Activated T-helper 2 cell treated with anti-CD3 and anti-CD28 coated beads, Interferon-gamma antibody, Interleukin-2, Interleukin-4, amounts not matched to agents 10 μg/mL and 5 μg/mL and 100 μg/mL, durations not matched to agents 14 hours and 24 hours and 36 hours (primary cell): ENCODE measurements at regions of chr10 and their contacts with region 1.

Region 1: DNA sequence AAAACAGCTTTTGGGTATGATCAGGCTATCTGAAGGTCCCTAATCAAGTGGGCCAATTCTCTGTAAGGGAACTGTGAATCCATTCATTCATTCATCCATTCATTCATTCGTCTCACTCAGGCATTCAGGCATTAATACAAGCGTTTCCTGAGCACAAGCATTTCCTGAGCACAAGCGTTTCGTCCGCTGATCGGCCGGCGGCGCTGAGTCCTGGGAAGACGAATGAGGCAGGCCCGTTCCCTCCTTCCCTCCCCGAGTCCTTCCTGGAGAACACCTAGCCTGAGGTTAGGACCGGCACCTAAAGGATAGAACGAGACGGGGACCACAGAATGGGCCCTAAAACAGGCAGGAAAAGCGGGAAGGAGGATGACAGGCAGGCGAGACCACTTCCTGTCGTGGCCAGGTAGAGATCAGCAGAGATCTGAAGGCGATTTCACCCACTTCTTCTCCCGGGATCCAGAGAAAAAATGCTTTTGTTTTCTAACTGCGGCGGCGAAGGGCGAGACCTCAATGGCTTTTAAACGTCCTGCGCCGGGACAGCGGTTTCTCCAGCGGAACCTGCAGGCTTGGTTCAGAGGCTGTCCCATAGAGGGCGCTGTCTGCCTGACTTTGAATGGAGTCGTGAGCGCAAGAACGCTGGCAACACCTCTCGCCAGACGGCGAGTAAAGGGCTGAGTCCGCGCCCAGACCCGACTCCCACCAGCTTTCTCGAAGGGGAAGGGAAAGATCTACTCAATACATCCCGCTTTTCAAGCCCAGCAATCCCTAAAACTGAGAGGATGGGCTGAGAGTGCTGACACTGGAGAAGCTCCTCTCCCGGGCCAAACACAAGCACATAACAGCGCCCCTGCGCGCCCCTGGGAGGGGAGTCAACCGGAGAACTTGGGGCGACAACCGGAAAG is 2.9 kb upstream of the HMX3 start:
- DNase-seq: peak; percentile 74
- H3K4me3 Mint-ChIP-seq: peak overlapping the region; percentile 55
- H3K27ac Mint-ChIP-seq: peak overlapping the region; percentile 44
- H3K4me1 Mint-ChIP-seq: peaks cover 14% of the 10 kb centered on the region
- H3K27me3 Mint-ChIP-seq: peaks cover 60% of the 10 kb centered on the region

Region 2: GRCh38 chr10:123043409-123043925 is 89.4 kb before region 1 on chr10:
- intact Hi-C with region 1: loop called (anchors 5 kb)
- DNase-seq: peak; percentile 32
- H3K4me3 Mint-ChIP-seq: no peak overlapping the region
- H3K27ac Mint-ChIP-seq: no peak overlapping the region
- H3K4me1 Mint-ChIP-seq: peaks cover 11% of the 10 kb centered on the region
- H3K27me3 Mint-ChIP-seq: no peaks in the 10 kb centered on the region

Region 3: GRCh38 chr10:123147635-123148413 is 15.0 kb after region 1 on chr10 and contains the start of gene HMX2:
- intact Hi-C with region 1: loop called (anchors 1 kb)
- DNase-seq: peak; percentile 12
- H3K4me3 Mint-ChIP-seq: peak within 1 kb of the TSS; percentile 57
- H3K27ac Mint-ChIP-seq: peak within 1 kb of the TSS; percentile 49
- H3K4me1 Mint-ChIP-seq: peaks cover 26% of the 10 kb centered on the region
- H3K27me3 Mint-ChIP-seq: peaks cover 69% of the 10 kb centered on the region
- total RNA-seq, gene HMX2: not detected in 2 replicates

Region 4: DNA sequence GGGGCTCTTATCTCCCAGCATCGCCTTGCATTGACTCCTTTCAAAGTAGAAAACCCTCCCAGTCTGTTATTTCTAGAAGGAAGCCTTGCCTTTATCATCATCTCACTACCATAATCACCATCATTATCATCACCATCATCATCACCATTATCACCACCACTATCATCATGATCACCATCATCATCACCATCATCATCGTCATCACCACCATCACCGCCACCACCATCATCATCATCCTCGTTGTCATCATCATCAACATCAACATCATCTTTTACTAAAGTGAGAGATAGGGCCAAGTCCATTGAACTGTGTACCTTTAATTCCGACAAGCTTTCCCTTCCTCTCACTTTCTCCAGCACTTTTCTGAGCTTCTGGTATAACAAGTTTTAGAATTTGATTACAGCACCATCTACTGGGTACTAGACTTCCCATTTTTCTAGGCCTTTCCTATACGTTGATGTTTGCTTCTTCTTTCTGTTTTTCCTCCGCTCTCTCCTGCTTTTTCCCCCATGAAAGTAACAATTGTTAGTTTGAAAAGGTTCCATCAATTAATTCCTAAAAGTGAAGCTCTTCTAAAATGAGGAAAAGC is 247.8 kb after region 1 on chr10:
- intact Hi-C with region 1: loop called (anchors 5 kb)
- DNase-seq: no peak
- H3K4me3 Mint-ChIP-seq: no peak overlapping the region
- H3K27ac Mint-ChIP-seq: no peak overlapping the region
- H3K4me1 Mint-ChIP-seq: no peaks in the 10 kb centered on the region
- H3K27me3 Mint-ChIP-seq: no peaks in the 10 kb centered on the region

Region 5: DNA sequence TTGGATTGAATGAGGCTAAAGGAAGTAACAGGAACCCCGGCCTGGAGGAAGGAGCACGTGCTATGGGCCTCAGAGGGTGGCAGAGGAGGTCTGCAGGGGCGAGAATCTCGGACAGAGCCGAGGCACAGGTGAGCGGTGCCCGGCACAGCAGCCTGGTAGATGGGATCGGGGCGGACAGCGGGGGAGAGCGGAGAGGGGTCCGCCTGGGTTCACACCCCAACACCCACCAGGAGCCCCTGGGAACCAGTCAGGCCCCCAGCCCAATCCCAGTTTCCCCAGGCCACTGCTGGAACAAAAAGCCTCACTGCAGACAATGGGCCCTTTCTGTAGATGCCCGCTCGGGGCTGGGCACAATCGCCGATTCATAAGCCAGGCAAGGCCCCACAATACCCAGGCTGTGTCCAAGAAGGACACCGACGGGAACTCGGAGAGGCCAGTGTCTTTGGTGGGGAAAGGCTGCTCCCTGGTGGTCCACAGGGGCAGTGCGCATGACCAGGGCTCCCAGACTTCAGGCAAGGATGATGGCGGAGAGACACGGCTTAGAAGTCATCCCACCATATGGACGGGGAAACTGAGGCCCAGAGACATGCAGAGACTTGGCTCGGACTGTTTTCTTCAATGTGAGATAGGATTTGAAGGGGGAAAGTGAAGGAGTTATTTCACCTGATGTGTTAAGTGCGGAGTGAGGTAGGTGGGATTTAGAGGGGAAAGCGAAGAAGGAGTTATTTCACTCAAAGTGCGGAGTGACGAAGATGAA is 426.4 kb after region 1 on chr10:
- intact Hi-C with region 1: loop called (anchors 1 kb)
- DNase-seq: peak; percentile 35
- H3K4me3 Mint-ChIP-seq: no peak overlapping the region
- H3K27ac Mint-ChIP-seq: no peak overlapping the region
- H3K4me1 Mint-ChIP-seq: no peaks in the 10 kb centered on the region
- H3K27me3 Mint-ChIP-seq: peaks cover 1% of the 10 kb centered on the region

Region 6: GRCh38 chr10:123967396-123968243 is 834.8 kb after region 1 on chr10:
- intact Hi-C with region 1: loop called (anchors 5 kb)
- DNase-seq: peak; percentile 19
- H3K4me3 Mint-ChIP-seq: no peak overlapping the region
- H3K27ac Mint-ChIP-seq: no peak overlapping the region
- H3K4me1 Mint-ChIP-seq: no peaks in the 10 kb centered on the region
- H3K27me3 Mint-ChIP-seq: peaks cover 24% of the 10 kb centered on the region